ENCODE measurements at regions of chr1 and their contacts with region 1.

Region 1: GRCh38 chr1:3564921-3565827 is 46.1 kb downstream of the MEGF6 start:
- DNase-seq: peak; percentile 22 to 69 (median 52)
- ATAC-seq: peak; percentile 62 to 71
- H3K4me3 Mint-ChIP-seq: no peak overlapping the region
- H3K27ac Mint-ChIP-seq: peak overlapping the region in 1 of 10 donors; percentile 67
- H3K4me1 Mint-ChIP-seq: peaks cover 0 to 5% (median under 1%) of the 10 kb centered on the region in 4 donors
- H3K27me3 Mint-ChIP-seq: peaks cover 0 to 3% (median 0%) of the 10 kb centered on the region in 5 donors

Region 2: GRCh38 chr1:3618881-3619671 is 53.9 kb after region 1 on chr1:
- POLR2A ChIA-PET with region 1: interaction called, 10 read pairs
- DNase-seq: peak; percentile 58 to 88 (median 78)
- ATAC-seq: peak; percentile 95
- H3K4me3 Mint-ChIP-seq: peak overlapping the region in 2 of 10 donors; percentile 7 to 52
- H3K27ac Mint-ChIP-seq: peak overlapping the region in 2 of 10 donors; percentile 33 to 57
- H3K4me1 Mint-ChIP-seq: peaks cover 25 to 49% (median 44%) of the 10 kb centered on the region in 4 donors
- H3K27me3 Mint-ChIP-seq: peaks cover 0 to 4% (median 0%) of the 10 kb centered on the region in 5 donors

Measured in naive thymus-derived CD8-positive, alpha-beta T cell (primary cell).